CD4-positive, alpha-beta memory T cell (primary cell): ENCODE measurements at regions of chr10 and their contacts with region 1.

Region 1: DNA sequence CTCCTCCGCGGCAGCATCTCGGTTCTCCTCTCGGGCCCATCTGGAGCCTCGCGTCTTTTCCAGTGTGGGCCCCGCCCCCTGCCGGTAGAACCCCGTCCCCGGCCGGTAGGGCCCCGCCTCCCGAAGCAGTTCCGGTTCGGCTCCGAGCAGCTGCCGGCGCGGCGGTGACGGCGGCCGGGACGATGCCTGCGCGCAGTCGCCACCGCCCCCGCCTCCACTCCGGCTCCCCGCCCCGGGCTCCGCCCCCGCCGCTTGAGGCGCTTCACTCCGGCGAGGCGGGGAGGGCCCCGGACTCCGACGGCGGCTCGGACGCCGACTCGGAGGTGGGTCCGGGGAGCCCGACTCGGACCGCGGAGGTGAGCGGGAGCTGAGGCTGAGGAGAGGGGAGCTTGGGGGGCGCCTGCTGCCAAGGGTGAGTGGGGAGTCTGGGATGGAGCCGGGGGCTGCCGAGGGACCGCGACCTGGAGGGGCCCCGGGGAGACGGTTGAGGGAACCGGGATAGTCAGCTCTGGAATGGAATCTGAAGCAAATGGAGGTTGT is at the start of gene SAMD8:
- DNase-seq: peak; percentile 93 to 97 (median 95)
- H3K4me3 ChIP-seq: peak within 1 kb of the TSS; percentile 61 to 88
- H3K4me3 Mint-ChIP-seq: peak within 1 kb of the TSS; percentile 86 to 98 (median 90)
- H3K27ac ChIP-seq: peak within 1 kb of the TSS; percentile 92
- H3K27ac Mint-ChIP-seq: peak within 1 kb of the TSS; percentile 92 to 97 (median 97)
- H3K4me1 ChIP-seq: peaks cover 42% of the 10 kb centered on the region
- H3K4me1 Mint-ChIP-seq: peaks cover 27 to 60% (median 48%) of the 10 kb centered on the region in 4 donors
- H3K27me3 ChIP-seq: no peaks in the 10 kb centered on the region
- H3K27me3 Mint-ChIP-seq: no peaks in the 10 kb centered on the region
- total RNA-seq, gene SAMD8: 17.9 to 20.6 TPM

Region 2: DNA sequence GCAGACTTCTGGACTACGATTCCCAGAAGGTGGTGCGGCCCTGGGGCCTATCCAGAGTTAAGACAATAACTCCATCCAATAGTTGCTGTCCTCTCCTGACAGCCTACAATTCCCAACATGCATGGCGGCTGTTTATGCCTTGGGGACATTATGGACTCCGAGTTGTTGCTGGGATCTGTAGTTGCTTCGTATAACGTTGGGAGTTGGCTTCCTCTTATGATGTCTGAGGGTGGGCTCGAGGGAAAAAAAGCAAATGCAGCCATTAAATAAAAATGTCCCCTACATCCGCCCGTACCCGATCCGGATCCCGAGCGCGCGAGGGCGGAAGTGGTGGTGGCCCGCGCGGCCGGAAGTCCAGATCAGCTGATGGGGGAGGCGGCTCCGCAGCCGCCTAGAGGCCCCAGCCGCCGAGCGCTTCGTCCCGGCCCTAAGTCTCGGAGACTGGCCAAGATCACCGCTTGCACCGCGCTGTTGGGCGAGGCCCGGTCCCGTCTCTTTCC is 1326.2 kb before region 1 on chr10 and contains the start of gene ZSWIM8:
- CTCF ChIA-PET with region 1: no interaction called
- POLR2A ChIA-PET with region 1: no interaction called
- intact Hi-C with region 1: loop called (anchors 5 kb)
- DNase-seq: peak; percentile 85 to 96 (median 89)
- H3K4me3 ChIP-seq: peak within 1 kb of the TSS; percentile 62 to 64
- H3K4me3 Mint-ChIP-seq: peak within 1 kb of the TSS; percentile 94 to 99 (median 98)
- H3K27ac ChIP-seq: peak within 1 kb of the TSS; percentile 77
- H3K27ac Mint-ChIP-seq: peak within 1 kb of the TSS; percentile 95 to 99 (median 99)
- H3K4me1 ChIP-seq: peaks cover 54% of the 10 kb centered on the region
- H3K4me1 Mint-ChIP-seq: peaks cover 35 to 67% (median 50%) of the 10 kb centered on the region in 4 donors
- H3K27me3 ChIP-seq: no peaks in the 10 kb centered on the region
- H3K27me3 Mint-ChIP-seq: peaks cover 2% of the 10 kb centered on the region in 2 donors
- total RNA-seq, gene ZSWIM8: 93.3 to 100 TPM

Region 3: GRCh38 chr10:74176380-74177139 is 934.9 kb before region 1 on chr10:
- CTCF ChIA-PET with region 1: no interaction called
- POLR2A ChIA-PET with region 1: interaction called, 3 read pairs
- intact Hi-C with region 1: loop called (anchors 5 kb)
- DNase-seq: peak; percentile 95 to 98 (median 97)
- H3K4me3 ChIP-seq: peak overlapping the region; percentile 82 to 92
- H3K4me3 Mint-ChIP-seq: peak overlapping the region; percentile 90 to 94 (median 93)
- H3K27ac ChIP-seq: peak overlapping the region; percentile 76
- H3K27ac Mint-ChIP-seq: peak overlapping the region; percentile 96 to 98 (median 97)
- H3K4me1 ChIP-seq: peaks cover 42% of the 10 kb centered on the region
- H3K4me1 Mint-ChIP-seq: peaks cover 24 to 49% (median 39%) of the 10 kb centered on the region in 4 donors
- H3K27me3 ChIP-seq: no peaks in the 10 kb centered on the region
- H3K27me3 Mint-ChIP-seq: no peaks in the 10 kb centered on the region

Region 4: GRCh38 chr10:74967911-74968645 is 143.4 kb before region 1 on chr10:
- CTCF ChIA-PET with region 1: no interaction called
- POLR2A ChIA-PET with region 1: no interaction called
- intact Hi-C with region 1: no loop called
- DNase-seq: peak in 4 of 5 donors; percentile 14 to 25 (median 19)
- H3K4me3 ChIP-seq: no peak overlapping the region
- H3K4me3 Mint-ChIP-seq: peak overlapping the region; percentile 34 to 82 (median 72)
- H3K27ac ChIP-seq: peak overlapping the region; percentile 37
- H3K27ac Mint-ChIP-seq: peak overlapping the region; percentile 66 to 93 (median 85)
- H3K4me1 ChIP-seq: peaks cover 20% of the 10 kb centered on the region
- H3K4me1 Mint-ChIP-seq: peaks cover 31 to 49% (median 43%) of the 10 kb centered on the region in 4 donors
- H3K27me3 ChIP-seq: no peaks in the 10 kb centered on the region
- H3K27me3 Mint-ChIP-seq: no peaks in the 10 kb centered on the region

Region 5: DNA sequence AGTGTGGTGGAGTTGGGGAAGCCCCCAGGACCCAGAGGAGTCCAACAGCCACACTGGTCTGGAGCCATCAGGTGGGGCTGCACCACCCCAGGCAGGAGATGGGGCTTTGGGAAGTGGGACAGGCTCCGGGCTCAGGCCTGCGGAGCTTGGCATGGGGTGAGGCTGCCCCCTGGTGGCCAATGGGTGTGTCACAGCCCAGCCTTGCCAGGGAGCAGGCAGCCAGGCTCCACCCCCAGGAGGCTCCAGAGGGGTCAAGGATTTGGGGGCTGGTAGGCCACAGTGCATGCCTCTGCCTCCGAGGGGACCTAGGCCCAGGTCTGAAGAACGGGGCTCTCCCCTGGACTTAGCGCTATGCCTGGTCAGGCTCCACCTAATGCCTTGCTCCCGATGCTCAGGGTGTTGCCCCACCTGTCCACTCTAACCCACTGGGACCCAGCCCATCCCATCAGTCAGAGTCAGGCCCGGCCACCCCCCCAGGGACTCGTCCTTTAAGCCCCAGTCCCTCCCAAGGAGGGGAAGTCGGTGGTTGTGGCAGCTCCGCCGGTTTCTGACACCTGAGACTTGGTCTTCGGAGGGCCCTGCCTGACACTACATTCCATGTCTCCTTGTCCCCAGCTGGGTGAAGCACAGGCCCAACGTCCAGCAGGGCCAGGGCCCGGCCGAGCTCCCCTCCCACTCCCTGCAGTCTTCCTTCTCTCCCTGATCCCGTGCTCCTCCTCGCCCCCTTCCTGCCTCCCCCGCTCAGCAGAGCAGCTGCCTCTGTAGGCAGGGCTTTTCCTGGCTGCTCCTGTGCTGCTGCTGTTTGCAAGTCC is 11.3 kb before region 1 on chr10:
- CTCF ChIA-PET with region 1: interaction called, 33 read pairs
- POLR2A ChIA-PET with region 1: interaction called, 4 read pairs
- intact Hi-C with region 1: no loop called
- DNase-seq: peak; percentile 63 to 76 (median 71)
- H3K4me3 ChIP-seq: no peak overlapping the region
- H3K4me3 Mint-ChIP-seq: no peak overlapping the region
- H3K27ac ChIP-seq: no peak overlapping the region
- H3K27ac Mint-ChIP-seq: peak overlapping the region in 2 of 7 donors; percentile 21 to 60
- H3K4me1 ChIP-seq: peaks cover 7% of the 10 kb centered on the region
- H3K4me1 Mint-ChIP-seq: peaks cover 0 to 5% (median 0%) of the 10 kb centered on the region in 4 donors
- H3K27me3 ChIP-seq: no peaks in the 10 kb centered on the region
- H3K27me3 Mint-ChIP-seq: no peaks in the 10 kb centered on the region

Region 6: GRCh38 chr10:75187961-75188426 is 76.6 kb after region 1 on chr10:
- CTCF ChIA-PET with region 1: interaction called, 10 read pairs
- POLR2A ChIA-PET with region 1: interaction called, 5 read pairs
- intact Hi-C with region 1: loop called (anchors 5 kb)
- DNase-seq: peak; percentile 75 to 80 (median 76)
- H3K4me3 ChIP-seq: no peak overlapping the region
- H3K4me3 Mint-ChIP-seq: no peak overlapping the region
- H3K27ac ChIP-seq: no peak overlapping the region
- H3K27ac Mint-ChIP-seq: peak overlapping the region; percentile 61 to 90 (median 70)
- H3K4me1 ChIP-seq: peaks cover 5% of the 10 kb centered on the region
- H3K4me1 Mint-ChIP-seq: peaks cover 5 to 9% (median 5%) of the 10 kb centered on the region in 4 donors
- H3K27me3 ChIP-seq: no peaks in the 10 kb centered on the region
- H3K27me3 Mint-ChIP-seq: no peaks in the 10 kb centered on the region

Region 7: DNA sequence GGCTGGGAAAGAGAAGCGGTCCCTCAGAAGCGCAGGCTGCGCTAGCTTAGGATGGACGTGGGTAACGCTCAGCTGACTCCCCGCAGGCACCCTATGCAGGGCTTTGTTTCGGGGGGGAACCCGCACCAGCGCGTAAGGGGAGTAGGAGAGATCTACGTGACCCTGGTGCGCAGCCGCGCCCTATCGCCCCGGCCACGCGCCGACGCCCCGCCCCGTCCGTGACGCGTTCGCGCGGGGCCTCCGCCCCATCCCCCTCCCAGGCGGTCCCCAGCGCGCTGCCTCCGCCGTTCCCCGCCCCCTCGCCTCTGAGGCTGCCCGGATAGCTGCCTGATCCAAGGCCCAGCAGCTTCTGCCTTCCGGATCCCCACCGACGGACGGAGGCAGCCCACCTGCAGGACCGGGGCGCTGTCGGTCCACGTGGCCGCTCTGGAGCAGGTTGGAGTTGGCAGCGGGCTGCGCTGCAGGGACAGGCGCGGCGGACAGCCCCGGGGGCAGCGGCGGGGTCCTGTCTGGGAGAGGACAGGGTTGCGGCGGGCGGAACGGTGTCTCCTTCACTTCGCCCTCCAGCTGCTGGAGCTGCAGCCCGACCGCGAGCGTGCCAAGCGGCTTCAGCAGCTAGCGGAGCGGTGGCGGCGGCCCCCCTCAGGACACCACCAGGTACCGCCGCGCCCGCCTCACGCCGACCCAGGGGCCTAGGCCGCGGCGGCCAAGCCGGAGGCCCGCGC is 99.0 kb after region 1 on chr10 and contains the start of gene VDAC2:
- CTCF ChIA-PET with region 1: interaction called, 7 read pairs
- POLR2A ChIA-PET with region 1: interaction called, 40 read pairs
- intact Hi-C with region 1: loop called (anchors 1 kb)
- DNase-seq: peak; percentile 94 to 100 (median 98)
- H3K4me3 ChIP-seq: peak within 1 kb of the TSS; percentile 96 to 100
- H3K4me3 Mint-ChIP-seq: peak within 1 kb of the TSS; percentile 98 to 100 (median 100)
- H3K27ac ChIP-seq: peak within 1 kb of the TSS; percentile 97
- H3K27ac Mint-ChIP-seq: peak within 1 kb of the TSS; percentile 96 to 100 (median 100)
- H3K4me1 ChIP-seq: peaks cover 31% of the 10 kb centered on the region
- H3K4me1 Mint-ChIP-seq: peaks cover 18 to 35% (median 26%) of the 10 kb centered on the region in 4 donors
- H3K27me3 ChIP-seq: no peaks in the 10 kb centered on the region
- H3K27me3 Mint-ChIP-seq: no peaks in the 10 kb centered on the region
- total RNA-seq, gene VDAC2: 76.9 to 79.0 TPM